ENCODE measurements at regions of chr3 and their contacts with region 1.

Region 1: GRCh38 chr3:12588039-12589009 is 31.4 kb downstream of the MKRN2 start:
- DNase-seq: no peak
- H3K4me3 ChIP-seq: no peak overlapping the region
- H3K27ac ChIP-seq: no peak overlapping the region
- H3K4me1 ChIP-seq: no peaks in the 10 kb centered on the region
- H3K27me3 ChIP-seq: no peaks in the 10 kb centered on the region
- CTCF ChIP-seq: no peak
- POLR2A ChIP-seq: no peak

Region 2: DNA sequence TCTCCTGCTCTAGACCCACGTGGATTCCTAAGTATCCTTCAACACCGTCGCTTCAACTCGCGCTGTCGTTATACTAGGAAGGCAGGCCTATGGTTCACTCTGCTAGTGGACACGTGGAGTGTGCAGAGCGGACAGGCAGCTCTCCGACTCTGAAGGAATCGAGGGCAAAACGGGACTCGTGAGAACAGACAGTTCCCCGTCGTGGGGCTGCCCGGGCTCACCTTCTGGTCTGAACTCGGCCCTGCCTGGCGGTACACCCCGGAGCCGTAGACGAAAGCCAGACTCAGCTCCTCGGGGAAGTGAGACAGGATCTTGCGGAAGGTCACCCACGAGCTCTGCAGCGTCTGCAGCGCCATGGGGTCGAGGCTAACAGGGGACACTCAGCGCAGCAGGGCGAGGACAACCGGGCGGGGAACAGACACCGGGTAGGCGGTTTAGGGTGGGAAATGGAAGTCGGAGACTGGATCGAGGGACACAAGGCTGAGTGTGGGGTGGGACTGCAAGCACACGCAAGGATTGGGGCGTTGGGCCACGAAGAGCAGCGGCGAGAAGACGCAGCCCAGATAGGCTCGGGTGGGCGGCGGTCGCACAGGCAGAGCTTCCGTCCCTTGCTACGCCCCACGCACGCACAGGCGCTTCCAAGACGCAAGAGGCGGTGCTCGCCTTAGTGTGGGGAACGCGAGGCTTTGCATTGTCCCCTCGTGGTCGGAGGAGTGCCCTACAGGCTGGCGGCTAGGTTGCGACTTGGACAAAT is 741.9 kb before region 1 on chr3 and contains the start of gene TAMM41:
- intact Hi-C with region 1: loop called (anchors 10 kb)
- DNase-seq: peak; percentile 80 to 90
- H3K4me3 ChIP-seq: peak within 1 kb of the TSS; percentile 63 to 96 (median 70)
- H3K27ac ChIP-seq: peak within 1 kb of the TSS; percentile 70 to 90
- H3K4me1 ChIP-seq: peaks cover 7 to 17% of the 10 kb centered on the region in 2 donors
- H3K27me3 ChIP-seq: no peaks in the 10 kb centered on the region
- CTCF ChIP-seq: peak; percentile 35 to 85 (median 80)
- POLR2A ChIP-seq: peak; percentile 14
- total RNA-seq, gene TAMM41: 6.7 to 16.8 (median 14.7) TPM

Region 3: GRCh38 chr3:12608376-12608775 is 20.1 kb after region 1 on chr3:
- intact Hi-C with region 1: loop called (anchors 2 kb)
- DNase-seq: no peak
- H3K4me3 ChIP-seq: no peak overlapping the region
- H3K27ac ChIP-seq: no peak overlapping the region
- H3K4me1 ChIP-seq: no peaks in the 10 kb centered on the region
- H3K27me3 ChIP-seq: no peaks in the 10 kb centered on the region
- CTCF ChIP-seq: no peak
- POLR2A ChIP-seq: no peak

Region 4: GRCh38 chr3:13839726-13840320 is 1251.5 kb after region 1 on chr3:
- intact Hi-C with region 1: no loop called
- DNase-seq: no peak
- H3K4me3 ChIP-seq: no peak overlapping the region
- H3K27ac ChIP-seq: no peak overlapping the region
- H3K4me1 ChIP-seq: no peaks in the 10 kb centered on the region
- H3K27me3 ChIP-seq: peaks cover 0 to 25% of the 10 kb centered on the region in 2 donors
- CTCF ChIP-seq: no peak
- POLR2A ChIP-seq: no peak

Measured in breast epithelium (tissue), 4 donors.